A673 (cell line): ENCODE measurements at regions of chr14 and their contacts with region 1.

Region 1: GRCh38 chr14:79254069-79254775 is 957.1 kb downstream of the DIO2 start:
- DNase-seq: no peak
- H3K4me3 ChIP-seq: no peak overlapping the region
- H3K27ac ChIP-seq: no peak overlapping the region
- H3K4me1 ChIP-seq: no peaks in the 10 kb centered on the region
- H3K27me3 ChIP-seq: no peaks in the 10 kb centered on the region
- CTCF ChIP-seq: no peak

Region 2: DNA sequence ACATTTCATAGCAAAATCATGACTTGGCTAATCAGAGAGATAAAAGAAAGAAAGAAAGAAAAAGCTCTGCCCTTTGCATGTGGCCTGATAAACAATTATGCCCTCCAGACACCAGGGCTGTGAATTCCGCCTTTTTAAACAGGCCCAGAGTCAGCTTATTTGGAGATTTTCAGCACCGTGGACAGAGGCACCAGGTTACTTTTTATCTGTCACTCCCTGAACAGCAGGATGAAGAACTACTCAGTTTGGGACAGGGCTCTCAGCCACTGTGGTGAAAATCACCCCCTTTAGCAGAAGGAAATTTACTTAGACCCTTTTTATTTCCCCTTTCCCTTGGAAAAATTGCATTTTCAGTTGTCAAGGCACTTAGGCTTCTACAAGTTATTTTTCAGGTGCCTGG is 724.1 kb before region 1 on chr14:
- CTCF ChIA-PET with region 1: no interaction called
- POLR2A ChIA-PET with region 1: interaction called, 10 read pairs
- intact Hi-C with region 1: no loop called
- DNase-seq: peak; percentile 46
- H3K4me3 ChIP-seq: no peak overlapping the region
- H3K27ac ChIP-seq: no peak overlapping the region
- H3K4me1 ChIP-seq: peaks cover 2% of the 10 kb centered on the region
- H3K27me3 ChIP-seq: no peaks in the 10 kb centered on the region
- CTCF ChIP-seq: no peak